ENCODE measurements at regions of chr3 and their contacts with region 1.

Region 1: DNA sequence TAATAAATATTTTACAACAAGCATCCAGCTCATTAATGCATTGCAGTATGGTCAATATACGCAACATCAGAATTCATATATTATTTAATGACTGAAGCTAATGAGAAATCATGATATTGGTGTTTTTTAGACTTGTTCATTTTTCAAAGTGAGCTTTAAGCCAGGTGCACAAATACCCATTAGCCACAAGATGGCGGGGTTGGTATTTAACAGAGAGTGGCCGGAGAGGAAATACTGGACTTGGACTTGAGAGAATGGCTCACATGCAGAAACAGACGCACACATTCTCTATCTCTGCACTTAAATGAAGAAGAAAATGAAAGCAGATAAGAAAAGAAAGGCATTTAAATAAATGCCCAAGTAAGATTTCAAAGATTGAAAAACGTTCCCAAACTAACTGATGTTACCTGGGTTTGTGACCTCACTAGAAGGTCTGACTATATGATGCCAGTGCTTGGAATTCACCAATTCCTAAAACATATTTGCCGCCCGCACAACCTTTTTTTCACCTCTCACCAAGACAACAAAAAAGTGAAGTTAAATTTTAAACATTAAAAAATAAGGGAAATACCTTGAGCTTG is 21.2 kb upstream of the CRBN start:
- DNase-seq: no peak
- ATAC-seq: peak; percentile 73

Region 2: DNA sequence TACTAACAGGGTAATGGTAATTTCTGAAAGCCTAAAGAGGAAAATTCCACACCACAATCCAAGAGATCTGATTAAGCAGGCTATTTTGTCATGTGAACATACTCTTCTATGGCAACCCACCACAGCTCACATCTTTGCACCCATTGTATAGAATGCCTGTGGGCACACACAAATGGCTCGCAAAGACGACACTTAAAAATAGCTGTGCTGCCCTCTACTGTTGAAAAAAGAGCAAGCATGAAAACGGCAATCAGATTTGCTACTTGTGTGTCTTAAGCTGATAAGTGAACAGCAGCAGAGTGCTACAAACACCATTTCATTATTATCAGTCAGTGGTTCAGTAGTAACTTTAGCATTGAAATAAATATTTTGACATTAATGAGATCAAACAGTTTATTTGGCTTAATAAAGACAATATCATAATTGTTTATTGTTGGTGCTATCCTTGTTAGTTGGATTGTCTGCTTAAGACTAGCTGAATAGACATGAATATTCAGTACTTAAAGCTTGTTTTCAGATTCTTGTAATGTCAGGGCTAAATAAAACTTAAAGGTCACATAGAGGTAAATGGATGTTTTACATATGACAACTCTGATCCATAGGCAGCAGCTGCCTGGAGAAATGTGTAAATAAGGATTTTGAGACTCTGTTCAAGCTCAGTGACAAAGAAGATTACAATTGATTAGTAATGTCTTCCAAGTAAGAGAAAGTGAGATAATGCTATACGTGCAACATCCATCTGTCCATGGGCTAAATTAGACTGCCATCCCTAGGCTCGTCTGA is 797.6 kb after region 1 on chr3:
- intact Hi-C with region 1: loop called (anchors 10 kb)
- DNase-seq: no peak
- ATAC-seq: no peak

Region 3: DNA sequence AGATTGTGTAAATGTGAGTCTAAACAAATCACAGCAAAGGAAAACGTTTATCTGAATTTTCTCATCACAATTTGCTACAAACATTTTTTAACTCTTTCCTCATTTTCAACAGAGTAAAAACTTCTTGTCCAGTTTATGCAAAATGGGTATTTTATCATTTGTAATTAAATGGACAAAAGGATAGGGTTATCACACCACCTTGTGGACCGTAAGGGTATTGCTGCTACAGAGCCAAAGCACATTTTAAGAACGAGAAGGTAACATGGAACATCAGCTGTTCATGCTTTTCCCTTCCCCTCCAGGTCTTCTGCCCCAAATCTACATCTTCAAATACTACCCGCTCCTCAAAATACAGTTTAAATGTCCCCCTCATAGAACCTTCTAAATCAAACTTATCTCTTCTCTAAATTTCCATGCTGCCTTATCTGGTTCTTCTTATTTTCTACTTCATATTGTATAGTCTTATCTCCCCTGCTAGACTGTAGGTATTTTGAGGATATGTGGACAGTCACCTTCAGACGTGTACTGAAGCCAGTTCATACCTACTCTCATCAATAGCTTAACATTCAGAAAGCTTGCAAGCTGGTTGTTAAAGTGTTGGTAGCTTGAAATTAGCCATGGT is 1089.7 kb after region 1 on chr3:
- intact Hi-C with region 1: loop called (anchors 5 kb)
- DNase-seq: no peak
- ATAC-seq: peak; percentile 53